ENCODE measurements at regions of chr1 and their contacts with region 1.

Region 1: DNA sequence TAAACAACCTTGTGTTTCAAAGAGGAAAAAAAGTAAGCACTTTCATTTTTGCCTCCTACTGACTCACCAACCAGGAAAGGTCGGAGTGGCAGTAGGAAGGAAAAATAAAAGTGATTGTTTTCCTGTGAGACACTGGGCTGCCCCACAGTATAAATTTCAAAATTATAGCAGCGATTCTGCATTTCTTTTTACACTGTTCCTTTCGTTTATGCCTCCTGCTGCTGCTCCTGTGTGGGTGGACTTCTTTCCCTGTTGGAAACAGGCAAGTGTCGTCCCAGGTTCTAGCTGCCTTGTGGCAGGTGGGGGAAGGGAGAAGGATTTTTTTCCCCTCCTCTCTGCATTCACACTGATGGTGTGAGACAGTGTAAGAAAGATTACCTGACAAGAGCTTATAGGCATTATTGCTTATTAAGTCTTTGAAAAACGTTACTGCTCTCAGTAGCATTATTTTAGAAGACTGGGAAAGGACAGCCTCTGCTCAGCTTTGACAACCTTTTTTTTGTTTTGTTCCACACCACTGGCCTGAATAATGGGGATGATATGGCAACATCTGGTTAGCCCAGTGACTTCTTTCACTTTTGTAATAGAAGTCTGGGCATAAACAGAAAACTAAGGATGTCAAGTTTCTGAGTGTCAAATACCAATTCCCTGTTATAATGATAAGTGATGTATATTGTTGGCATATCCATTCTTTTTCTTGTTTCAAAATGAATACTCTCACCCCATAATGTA is 77.9 kb downstream of the NEK7 start:
- DNase-seq: peak; percentile 17
- H3K4me3 Mint-ChIP-seq: peak overlapping the region; percentile 43
- H3K27ac Mint-ChIP-seq: peak overlapping the region; percentile 48
- H3K4me1 Mint-ChIP-seq: peaks cover 23% of the 10 kb centered on the region
- H3K27me3 Mint-ChIP-seq: no peaks in the 10 kb centered on the region
- CTCF ChIP-seq: no peak

Region 2: GRCh38 chr1:197868751-197869489 is 365.8 kb before region 1 on chr1:
- CTCF ChIA-PET with region 1: no interaction called
- intact Hi-C with region 1: no loop called
- DNase-seq: peak; percentile 62
- H3K4me3 Mint-ChIP-seq: no peak overlapping the region
- H3K27ac Mint-ChIP-seq: no peak overlapping the region
- H3K4me1 Mint-ChIP-seq: peaks cover 1% of the 10 kb centered on the region
- H3K27me3 Mint-ChIP-seq: no peaks in the 10 kb centered on the region
- CTCF ChIP-seq: peak; percentile 68

Region 3: GRCh38 chr1:198699167-198700015 is 464.7 kb after region 1 on chr1:
- CTCF ChIA-PET with region 1: interaction called, 12 read pairs
- intact Hi-C with region 1: no loop called
- DNase-seq: peak; percentile 82
- H3K4me3 Mint-ChIP-seq: peak overlapping the region; percentile 33
- H3K27ac Mint-ChIP-seq: peak overlapping the region; percentile 84
- H3K4me1 Mint-ChIP-seq: peaks cover 24% of the 10 kb centered on the region
- H3K27me3 Mint-ChIP-seq: no peaks in the 10 kb centered on the region
- CTCF ChIP-seq: peak; percentile 90

Measured in Calu3 (cell line).